Posterior vena cava (tissue), 2 donors: ENCODE measurements at regions of chr19 and their contacts with region 1.

Region 1: DNA sequence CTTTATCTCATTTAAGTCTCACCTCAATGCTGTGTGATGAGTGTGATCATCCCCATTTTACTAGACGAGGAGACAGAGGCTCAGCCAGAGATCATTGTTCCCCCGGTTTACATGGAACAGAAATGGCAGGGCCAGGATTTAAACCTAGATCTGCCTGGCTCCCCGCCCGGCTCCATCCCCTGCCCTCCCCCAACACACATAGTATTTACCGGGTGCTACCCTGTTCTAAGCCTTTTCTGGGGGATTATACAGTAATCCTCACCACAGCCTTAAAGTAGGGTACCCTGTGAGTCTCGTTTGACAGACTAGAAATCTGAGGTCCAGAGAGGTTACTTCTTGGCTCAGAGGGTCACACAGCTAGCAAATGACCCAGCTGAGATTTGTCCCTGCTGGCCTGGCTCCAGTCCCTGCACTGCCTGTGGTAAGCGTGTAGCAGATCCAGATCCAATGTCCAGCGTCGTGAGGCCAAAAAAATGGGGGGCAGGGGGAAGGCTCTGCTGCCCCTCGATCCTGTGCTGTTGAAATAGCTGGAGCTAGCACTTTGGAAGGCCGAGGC is 3.8 kb upstream of the KLC3 start:
- DNase-seq: no peak

Region 2: GRCh38 chr19:45117669-45118068 is 219.1 kb before region 1 on chr19:
- intact Hi-C with region 1: no loop called
- DNase-seq: no peak

Region 3: DNA sequence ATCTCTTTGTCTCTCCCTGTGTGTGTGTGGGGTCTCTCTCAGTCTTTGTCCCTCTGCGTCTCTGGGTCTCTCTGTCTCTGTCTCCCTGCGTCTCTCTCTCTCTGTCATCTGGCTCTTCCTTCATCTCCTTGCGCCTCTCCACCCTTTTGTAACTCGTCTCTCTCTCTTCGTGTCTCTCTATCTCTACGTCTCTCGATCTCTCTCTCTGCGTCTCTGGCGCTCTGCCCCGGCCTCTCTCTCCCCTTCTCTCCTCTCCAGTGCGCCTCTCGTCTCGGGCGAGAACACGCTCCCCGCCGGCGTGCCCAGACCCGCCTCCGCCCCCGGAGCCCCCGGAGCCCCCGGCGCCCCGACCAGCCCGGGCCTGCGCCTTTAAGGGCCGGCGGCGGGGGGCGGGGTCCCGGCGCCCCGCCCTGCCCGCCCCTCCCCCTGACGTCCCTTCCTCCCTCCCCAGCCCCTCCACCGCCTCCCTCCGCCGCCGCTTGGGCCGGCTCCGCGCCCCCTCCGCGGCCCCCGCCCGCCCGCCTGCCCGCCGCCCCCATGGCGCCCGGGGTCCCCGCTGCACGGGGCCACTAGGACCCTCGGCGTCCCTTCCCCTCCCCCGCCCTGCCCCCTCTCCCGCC is 85.8 kb before region 1 on chr19 and contains the start of gene MARK4:
- intact Hi-C with region 1: loop called in 1 of 2 experiments (anchors 5 kb)
- DNase-seq: peak; percentile 85
- total RNA-seq, gene MARK4: 26.7 to 31.5 TPM

Region 4: DNA sequence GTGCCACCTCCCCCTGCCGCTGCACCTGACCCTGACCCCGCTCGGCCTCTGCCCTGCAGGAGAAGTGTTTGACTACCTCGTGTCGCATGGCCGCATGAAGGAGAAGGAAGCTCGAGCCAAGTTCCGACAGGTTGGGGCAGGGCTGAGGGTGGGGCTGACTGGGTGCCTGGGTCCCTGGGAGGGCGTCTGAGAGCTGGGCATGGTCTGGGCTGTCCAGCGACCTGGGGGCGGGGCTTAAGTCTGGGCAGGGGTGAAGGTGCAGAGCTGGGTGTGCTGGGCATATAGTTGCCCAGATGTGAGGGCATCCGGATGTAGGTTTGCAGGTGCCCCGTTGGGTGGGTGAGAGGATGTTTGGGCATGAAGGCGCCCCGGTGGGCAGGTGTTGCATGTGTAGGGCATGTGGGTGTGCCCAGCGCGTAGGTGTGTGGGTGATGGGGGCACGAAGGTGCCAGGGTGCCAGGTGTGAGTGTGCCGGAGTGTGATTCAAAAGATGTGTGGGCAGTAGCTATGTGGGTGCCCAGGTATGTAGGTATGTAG is 71.9 kb before region 1 on chr19:
- intact Hi-C with region 1: no loop called
- DNase-seq: no peak